ENCODE measurements at regions of chr11 and their contacts with region 1.

Region 1: GRCh38 chr11:120335908-120336640 is at the start of gene ARHGEF12:
- DNase-seq: peak; percentile 93
- H3K4me3 ChIP-seq: peak within 1 kb of the TSS; percentile 63 to 97 (median 82)
- H3K27ac ChIP-seq: peak within 1 kb of the TSS; percentile 52
- H3K4me1 ChIP-seq: peaks cover 66% of the 10 kb centered on the region
- H3K27me3 ChIP-seq: no peaks in the 10 kb centered on the region
- CTCF ChIP-seq: peak in 1 of 2 donors; percentile 37
- total RNA-seq, gene ARHGEF12: 54.3 to 55.7 TPM

Region 2: DNA sequence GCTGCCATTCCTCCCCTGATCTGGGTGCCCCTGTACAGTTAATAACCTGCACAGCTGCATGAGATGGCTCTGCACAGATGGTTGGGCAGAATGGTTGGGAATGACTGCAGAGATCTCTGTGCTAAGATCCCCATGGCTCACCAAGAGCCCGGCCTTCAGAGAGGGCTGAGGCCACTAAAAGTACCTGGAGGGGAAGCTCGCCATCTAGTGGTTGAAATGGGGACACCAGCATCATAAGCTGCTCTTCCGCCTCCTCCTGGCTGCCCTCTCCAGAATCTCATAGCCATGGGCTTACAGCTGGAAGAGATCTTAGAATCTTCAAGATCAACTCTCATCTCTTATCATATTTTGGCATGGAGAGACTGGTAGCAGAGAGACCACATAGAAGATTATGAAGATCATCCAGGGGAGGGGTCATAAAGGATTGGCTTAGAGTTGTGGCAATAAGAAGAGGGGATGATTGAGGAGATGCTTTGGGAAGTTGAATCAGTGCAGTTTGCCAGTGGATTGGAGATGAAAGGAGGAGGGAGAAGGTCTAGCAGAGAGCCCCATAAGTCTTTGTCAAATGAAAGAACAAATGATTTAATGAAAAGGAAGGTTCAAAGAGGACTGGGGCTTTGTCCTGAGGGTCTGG is 33.0 kb before region 1 on chr11:
- CTCF ChIA-PET with region 1: interaction called, 5 read pairs
- dilution Hi-C with region 1: no loop called
- in situ Hi-C with region 1: no loop called
- intact Hi-C with region 1: loop called (anchors 2 kb)
- DNase-seq: peak; percentile 71
- H3K4me3 ChIP-seq: no peak overlapping the region
- H3K27ac ChIP-seq: no peak overlapping the region
- H3K4me1 ChIP-seq: peaks cover 39% of the 10 kb centered on the region
- H3K27me3 ChIP-seq: no peaks in the 10 kb centered on the region
- CTCF ChIP-seq: peak; percentile 97 to 98

Region 3: GRCh38 chr11:120400564-120401364 is 64.7 kb after region 1 on chr11:
- CTCF ChIA-PET with region 1: no interaction called
- dilution Hi-C with region 1: no loop called
- in situ Hi-C with region 1: no loop called
- intact Hi-C with region 1: loop called (anchors 2 kb)
- DNase-seq: peak; percentile 97
- H3K4me3 ChIP-seq: peak overlapping the region; percentile 0 to 59 (median 37)
- H3K27ac ChIP-seq: peak overlapping the region; percentile 26
- H3K4me1 ChIP-seq: peaks cover 23% of the 10 kb centered on the region
- H3K27me3 ChIP-seq: no peaks in the 10 kb centered on the region
- CTCF ChIP-seq: no peak

Region 4: DNA sequence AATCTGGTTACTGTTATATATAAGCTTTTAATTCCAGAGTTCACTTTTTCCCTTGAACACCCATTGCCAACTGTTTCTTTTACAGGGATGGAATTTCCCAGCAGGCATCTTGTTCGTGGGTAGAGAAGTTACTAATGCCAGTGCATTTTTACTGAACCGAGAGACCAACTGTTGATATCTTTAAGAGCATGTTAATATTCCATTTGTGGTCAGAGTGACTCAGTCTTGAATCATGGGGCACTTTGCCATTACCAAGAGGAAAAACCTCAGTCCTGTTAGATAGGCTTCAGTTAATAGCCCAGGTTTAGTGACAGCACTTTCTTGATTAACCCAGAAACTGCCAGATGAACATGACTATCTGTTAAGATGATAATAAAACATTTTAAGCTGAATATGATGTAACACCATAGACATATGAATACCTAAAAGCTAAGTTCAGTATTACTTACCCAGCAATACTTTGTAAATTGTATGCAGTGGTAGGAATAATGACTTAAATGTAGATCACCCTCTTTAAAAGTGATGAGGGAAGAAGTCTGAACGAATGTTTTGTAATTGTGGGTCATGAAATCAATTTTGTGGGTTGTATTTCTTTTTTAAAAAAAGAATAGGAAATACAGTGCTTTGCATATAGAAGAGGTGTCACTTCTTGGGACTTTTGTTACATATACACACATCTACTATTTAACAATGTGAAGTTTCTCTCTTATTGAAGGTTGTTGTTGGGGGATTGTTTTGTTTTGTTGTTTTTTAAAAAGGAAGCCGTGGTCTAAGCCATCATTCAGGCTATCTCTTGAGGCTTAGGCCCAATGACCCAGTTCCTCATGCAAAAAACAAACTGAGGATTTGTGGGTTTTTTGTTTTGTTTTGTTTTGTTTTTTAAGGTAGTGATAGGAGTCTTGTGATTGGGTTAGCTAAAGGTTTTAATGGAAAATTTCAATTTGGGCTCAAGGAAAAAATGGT is 96.3 kb after region 1 on chr11:
- CTCF ChIA-PET with region 1: no interaction called
- dilution Hi-C with region 1: no loop called
- in situ Hi-C with region 1: loop called in 1 of 2 experiments (anchors 25 kb)
- intact Hi-C with region 1: loop called (anchors 1 kb)
- DNase-seq: peak; percentile 97
- H3K4me3 ChIP-seq: no peak overlapping the region
- H3K27ac ChIP-seq: peak overlapping the region; percentile 71
- H3K4me1 ChIP-seq: peaks cover 12% of the 10 kb centered on the region
- H3K27me3 ChIP-seq: no peaks in the 10 kb centered on the region
- CTCF ChIP-seq: no peak

Region 5: DNA sequence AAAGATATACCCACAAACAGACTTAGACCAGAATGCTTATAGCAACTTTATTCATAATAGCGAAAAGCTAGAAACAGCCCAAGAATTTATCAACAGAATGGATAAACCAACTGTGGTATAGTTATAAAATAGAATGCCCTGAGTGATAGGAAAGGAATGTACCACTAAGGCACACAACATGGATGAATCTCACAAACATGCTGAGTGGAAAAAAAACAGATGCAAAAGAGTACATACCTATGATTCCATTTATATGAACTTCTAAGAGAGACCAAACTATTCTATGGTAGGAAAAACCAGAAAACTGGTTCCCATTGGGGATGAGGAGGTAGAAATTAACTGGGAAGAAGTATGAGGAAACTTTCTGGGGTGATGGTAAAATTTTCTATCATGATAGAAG is 135.1 kb after region 1 on chr11:
- CTCF ChIA-PET with region 1: no interaction called
- dilution Hi-C with region 1: no loop called
- in situ Hi-C with region 1: no loop called
- intact Hi-C with region 1: loop called (anchors 10 kb)
- DNase-seq: peak; percentile 8
- H3K4me3 ChIP-seq: no peak overlapping the region
- H3K27ac ChIP-seq: no peak overlapping the region
- H3K4me1 ChIP-seq: no peaks in the 10 kb centered on the region
- H3K27me3 ChIP-seq: no peaks in the 10 kb centered on the region
- CTCF ChIP-seq: no peak

Region 6: GRCh38 chr11:120682866-120683265 is 346.8 kb after region 1 on chr11:
- CTCF ChIA-PET with region 1: no interaction called
- dilution Hi-C with region 1: no loop called
- in situ Hi-C with region 1: no loop called
- intact Hi-C with region 1: loop called (anchors 2 kb)
- DNase-seq: peak; percentile 7
- H3K4me3 ChIP-seq: no peak overlapping the region
- H3K27ac ChIP-seq: no peak overlapping the region
- H3K4me1 ChIP-seq: no peaks in the 10 kb centered on the region
- H3K27me3 ChIP-seq: no peaks in the 10 kb centered on the region
- CTCF ChIP-seq: no peak

Region 7: GRCh38 chr11:120801801-120802689 is 466.0 kb after region 1 on chr11:
- CTCF ChIA-PET with region 1: no interaction called
- dilution Hi-C with region 1: no loop called
- in situ Hi-C with region 1: no loop called
- intact Hi-C with region 1: loop called (anchors 10 kb)
- DNase-seq: peak; percentile 40
- H3K4me3 ChIP-seq: no peak overlapping the region
- H3K27ac ChIP-seq: no peak overlapping the region
- H3K4me1 ChIP-seq: no peaks in the 10 kb centered on the region
- H3K27me3 ChIP-seq: no peaks in the 10 kb centered on the region
- CTCF ChIP-seq: peak; percentile 86 to 93